ENCODE measurements at regions of chr3 and their contacts with region 1.

Region 1: DNA sequence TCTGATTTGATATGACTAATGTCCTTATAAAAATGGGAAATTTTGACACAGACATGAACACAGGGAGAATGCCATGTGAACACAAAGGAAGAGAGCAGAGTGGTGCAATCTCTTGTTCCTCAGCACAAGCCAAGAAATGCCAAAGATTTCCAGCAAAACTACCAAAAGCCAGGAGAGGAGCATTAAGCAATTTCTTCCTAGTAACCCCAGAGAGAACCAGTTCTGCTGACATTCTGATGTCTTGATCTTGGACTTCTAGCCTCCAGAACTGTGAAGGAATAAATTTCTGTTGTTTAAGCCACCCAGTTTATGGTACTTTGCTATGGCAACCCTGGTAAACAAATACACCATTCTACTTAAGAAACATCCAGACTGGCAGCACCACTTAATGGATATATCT is 227.8 kb upstream of the MRPL3 start:
- DNase-seq: no peak
- H3K4me3 Mint-ChIP-seq: no peak overlapping the region
- H3K27ac Mint-ChIP-seq: no peak overlapping the region
- H3K4me1 Mint-ChIP-seq: peaks cover 21% of the 10 kb centered on the region
- H3K27me3 Mint-ChIP-seq: peaks cover 16% of the 10 kb centered on the region

Region 2: GRCh38 chr3:131608301-131608700 is 122.3 kb before region 1 on chr3:
- CTCF ChIA-PET with region 1: no interaction called
- POLR2A ChIA-PET with region 1: no interaction called
- intact Hi-C with region 1: no loop called
- DNase-seq: no peak
- H3K4me3 Mint-ChIP-seq: no peak overlapping the region
- H3K27ac Mint-ChIP-seq: no peak overlapping the region
- H3K4me1 Mint-ChIP-seq: no peaks in the 10 kb centered on the region
- H3K27me3 Mint-ChIP-seq: peaks cover 10% of the 10 kb centered on the region

Region 3: GRCh38 chr3:131714585-131715220 is 15.9 kb before region 1 on chr3:
- CTCF ChIA-PET with region 1: no interaction called
- POLR2A ChIA-PET with region 1: no interaction called
- intact Hi-C with region 1: loop called (anchors 2 kb)
- DNase-seq: peak; percentile 13
- H3K4me3 Mint-ChIP-seq: no peak overlapping the region
- H3K27ac Mint-ChIP-seq: no peak overlapping the region
- H3K4me1 Mint-ChIP-seq: peaks cover 9% of the 10 kb centered on the region
- H3K27me3 Mint-ChIP-seq: peaks cover 3% of the 10 kb centered on the region

Region 4: GRCh38 chr3:132210476-132211346 is 480.1 kb after region 1 on chr3:
- CTCF ChIA-PET with region 1: no interaction called
- POLR2A ChIA-PET with region 1: no interaction called
- intact Hi-C with region 1: no loop called
- DNase-seq: peak; percentile 34
- H3K4me3 Mint-ChIP-seq: no peak overlapping the region
- H3K27ac Mint-ChIP-seq: no peak overlapping the region
- H3K4me1 Mint-ChIP-seq: no peaks in the 10 kb centered on the region
- H3K27me3 Mint-ChIP-seq: peaks cover 14% of the 10 kb centered on the region

Region 5: GRCh38 chr3:132405188-132405587 is 674.6 kb after region 1 on chr3:
- CTCF ChIA-PET with region 1: no interaction called
- POLR2A ChIA-PET with region 1: no interaction called
- intact Hi-C with region 1: no loop called
- DNase-seq: no peak
- H3K4me3 Mint-ChIP-seq: no peak overlapping the region
- H3K27ac Mint-ChIP-seq: no peak overlapping the region
- H3K4me1 Mint-ChIP-seq: no peaks in the 10 kb centered on the region
- H3K27me3 Mint-ChIP-seq: peaks cover 3% of the 10 kb centered on the region

Measured in activated CD4-positive, alpha-beta memory T cell treated with anti-CD3 and anti-CD28 coated beads for 36 hours (primary cell).